K562 (cell line): ENCODE measurements at regions of chr12 and their contacts with region 1.

Region 1: GRCh38 chr12:108234158-108234557 is 105.0 kb downstream of the CMKLR1 start:
- DNase-seq: peak in 1 of 4 experiments; percentile 11
- ATAC-seq: 0 out of 3 replicates have a peak, but pooled peaks have one; percentile 32
- H3K4me3 ChIP-seq: no peak overlapping the region
- H3K27ac ChIP-seq: no peak overlapping the region
- H3K4me1 ChIP-seq: no peaks in the 10 kb centered on the region
- H3K27me3 ChIP-seq: no peaks in the 10 kb centered on the region
- CTCF ChIP-seq: peak in 2 of 3 experiments; percentile 31; a peak in 3 of 6 replicates
- EP300 ChIP-seq: no peak
- POLR2A ChIP-seq: no peak
- RAD21 ChIP-seq: peak; percentile 18 to 26; a peak in 2 of 4 replicates

Region 2: GRCh38 chr12:107436376-107436775 is 797.8 kb before region 1 on chr12:
- CTCF ChIA-PET with region 1: no interaction called
- POLR2A ChIA-PET with region 1: no interaction called
- in situ Hi-C with region 1: no loop called
- intact Hi-C with region 1: no loop called
- DNase-seq: no peak
- ATAC-seq: no peak
- H3K4me3 ChIP-seq: no peak overlapping the region
- H3K27ac ChIP-seq: no peak overlapping the region
- H3K4me1 ChIP-seq: no peaks in the 10 kb centered on the region
- H3K27me3 ChIP-seq: peaks cover 6 to 36% of the 10 kb centered on the region in 2 experiments; a peak in 4 of 5 replicates
- CTCF ChIP-seq: no peak
- EP300 ChIP-seq: no peak
- POLR2A ChIP-seq: no peak
- RAD21 ChIP-seq: no peak

Region 3: DNA sequence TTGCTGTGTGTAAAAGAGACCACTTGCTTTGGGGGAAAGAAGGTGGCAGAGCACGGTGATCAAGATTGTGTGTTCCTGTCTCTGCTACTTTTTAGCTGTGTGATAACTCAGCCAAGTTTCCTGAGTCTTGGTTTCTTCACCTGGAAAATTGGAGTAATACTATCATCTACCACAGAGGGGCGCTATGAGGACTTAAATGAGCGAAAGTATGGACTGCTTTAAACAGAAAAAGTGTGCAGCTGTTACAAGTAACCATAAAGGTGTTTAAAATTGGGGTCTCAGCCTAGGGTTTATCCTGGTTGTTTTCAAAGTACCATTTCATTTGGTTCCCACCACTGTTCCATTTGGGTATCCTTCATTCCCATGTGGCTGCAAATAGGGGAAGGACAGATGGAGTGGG is 171.0 kb before region 1 on chr12:
- CTCF ChIA-PET with region 1: no interaction called
- POLR2A ChIA-PET with region 1: no interaction called
- in situ Hi-C with region 1: no loop called
- intact Hi-C with region 1: loop called (anchors 1 kb)
- DNase-seq: peak; percentile 39 to 66 (median 45)
- ATAC-seq: peak; percentile 78
- H3K4me3 ChIP-seq: no peak overlapping the region
- H3K27ac ChIP-seq: no peak overlapping the region
- H3K4me1 ChIP-seq: no peaks in the 10 kb centered on the region
- H3K27me3 ChIP-seq: peaks cover 0 to 3% of the 10 kb centered on the region in 2 experiments; a peak in 2 of 5 replicates
- CTCF ChIP-seq: peak; percentile 67 to 82 (median 80); a peak in 5 of 6 replicates
- EP300 ChIP-seq: no peak
- POLR2A ChIP-seq: no peak
- RAD21 ChIP-seq: peak; percentile 65 to 86

Region 4: DNA sequence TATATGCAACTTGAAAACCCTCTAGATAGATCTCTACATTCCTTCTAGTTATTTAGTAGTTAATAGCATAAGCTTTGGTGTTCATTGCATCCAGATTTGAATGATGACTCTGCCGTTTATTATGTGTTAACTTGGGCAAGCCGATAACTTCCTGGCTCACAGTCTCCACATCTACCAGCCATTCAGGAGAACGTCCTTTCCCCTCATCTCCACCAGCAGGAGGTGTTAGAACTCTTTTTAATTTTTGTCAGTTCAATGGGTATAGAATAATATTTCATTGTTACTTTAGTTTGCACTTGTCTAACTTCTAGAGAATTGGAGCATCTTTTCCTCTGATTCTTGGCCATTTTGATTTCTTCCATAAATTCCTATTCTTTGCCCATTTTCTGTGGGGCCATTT is 135.1 kb before region 1 on chr12:
- CTCF ChIA-PET with region 1: interaction called, 3 read pairs
- POLR2A ChIA-PET with region 1: no interaction called
- in situ Hi-C with region 1: no loop called
- intact Hi-C with region 1: loop called (anchors 2 kb)
- DNase-seq: peak in 2 of 4 experiments; percentile 27 to 58
- ATAC-seq: peak; percentile 78
- H3K4me3 ChIP-seq: no peak overlapping the region
- H3K27ac ChIP-seq: no peak overlapping the region
- H3K4me1 ChIP-seq: peaks cover 4 to 15% of the 10 kb centered on the region in 2 experiments; a peak in 4 of 5 replicates
- H3K27me3 ChIP-seq: peaks cover 3 to 6% of the 10 kb centered on the region in 2 experiments; a peak in 3 of 5 replicates
- CTCF ChIP-seq: peak; percentile 60 to 84 (median 62); a peak in 5 of 6 replicates
- EP300 ChIP-seq: no peak
- POLR2A ChIP-seq: no peak
- RAD21 ChIP-seq: peak; percentile 71 to 86

Region 5: DNA sequence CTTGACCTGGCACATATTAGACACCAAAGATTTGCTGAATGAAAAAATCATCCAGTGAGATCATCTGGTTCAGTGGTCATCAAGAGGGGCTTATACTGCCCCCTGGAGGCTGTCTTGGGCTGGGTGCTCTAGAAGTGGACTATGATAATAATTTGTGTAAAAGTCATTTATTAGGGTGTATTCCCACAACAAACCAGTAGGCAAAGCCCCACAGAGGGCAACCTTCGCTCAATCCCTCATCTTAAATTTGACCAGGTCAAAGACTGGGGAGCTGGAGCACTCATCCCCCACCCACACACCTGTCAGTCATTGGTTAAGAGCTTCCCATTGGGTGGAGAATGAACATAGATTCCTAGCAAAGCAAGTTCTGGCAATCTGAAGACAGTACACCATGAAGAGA is 260.9 kb after region 1 on chr12:
- CTCF ChIA-PET with region 1: no interaction called
- POLR2A ChIA-PET with region 1: no interaction called
- in situ Hi-C with region 1: no loop called
- intact Hi-C with region 1: loop called (anchors 10 kb)
- DNase-seq: peak; percentile 76 to 79 (median 78)
- ATAC-seq: peak; percentile 94
- H3K4me3 ChIP-seq: no peak overlapping the region
- H3K27ac ChIP-seq: no peak overlapping the region
- H3K4me1 ChIP-seq: no peaks in the 10 kb centered on the region; a peak in 1 of 5 replicates
- H3K27me3 ChIP-seq: peaks cover 16 to 31% of the 10 kb centered on the region in 2 experiments
- CTCF ChIP-seq: peak; percentile 84 to 93 (median 84)
- EP300 ChIP-seq: no peak
- POLR2A ChIP-seq: no peak
- RAD21 ChIP-seq: peak; percentile 73 to 90